Psoas muscle (tissue), 8 donors: ENCODE measurements at regions of chr12 and their contacts with region 1.

Region 1: DNA sequence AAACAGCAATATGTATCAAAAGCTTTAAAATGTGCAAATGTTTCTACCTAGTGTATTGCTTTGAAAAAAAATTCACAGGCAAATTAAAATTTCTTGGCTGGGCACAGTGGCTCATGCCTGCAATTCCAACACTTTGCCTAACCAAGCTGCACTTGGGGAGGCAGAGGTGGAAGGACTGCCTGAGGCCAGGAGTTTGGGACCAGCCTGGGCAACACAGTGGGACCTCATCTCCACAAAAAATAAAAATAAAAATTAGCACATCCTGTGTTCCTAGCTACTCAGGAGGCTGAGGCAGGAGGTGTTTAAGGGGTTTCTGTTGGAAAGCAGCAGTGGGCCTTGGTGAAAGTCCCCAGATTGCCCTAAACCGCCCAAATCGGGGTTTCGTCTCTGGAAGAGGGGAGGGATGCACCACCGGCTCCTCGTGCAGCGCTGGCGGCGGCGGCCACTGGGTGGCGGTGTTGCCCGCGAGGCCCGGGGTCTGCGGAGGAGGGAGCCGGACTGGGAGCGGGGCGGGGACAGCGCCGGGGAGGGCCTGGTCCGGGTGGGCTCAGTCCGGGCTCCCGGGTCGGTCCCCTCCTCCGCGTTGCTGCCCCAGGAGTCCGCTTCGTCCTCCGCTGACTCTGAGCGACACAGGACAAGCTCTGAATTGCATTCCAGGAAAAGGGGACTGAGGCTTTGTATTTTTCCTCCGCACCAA is 265.6 kb downstream of the AACS start:
- DNase-seq: peak; percentile 56 to 68
- ATAC-seq: peak; percentile 39 to 82 (median 59)
- H3K4me3 ChIP-seq: peak overlapping the region; percentile 57
- H3K27ac ChIP-seq: no peak overlapping the region
- H3K4me1 ChIP-seq: no peaks in the 10 kb centered on the region
- H3K27me3 ChIP-seq: peaks cover 0 to 25% (median 12%) of the 10 kb centered on the region in 3 donors
- CTCF ChIP-seq: peak; percentile 62

Region 2: GRCh38 chr12:125402874-125403789 is 72.3 kb after region 1 on chr12:
- intact Hi-C with region 1: loop called in 1 of 2 experiments (anchors 2 kb)
- DNase-seq: no peak
- ATAC-seq: no peak
- H3K4me3 ChIP-seq: no peak overlapping the region
- H3K27ac ChIP-seq: no peak overlapping the region
- H3K4me1 ChIP-seq: no peaks in the 10 kb centered on the region
- H3K27me3 ChIP-seq: peaks cover 0 to 2% (median 0%) of the 10 kb centered on the region in 3 donors
- CTCF ChIP-seq: peak; percentile 53